Stomach (tissue), 19 donors: ENCODE measurements at regions of chr1 and their contacts with region 1.

Region 1: DNA sequence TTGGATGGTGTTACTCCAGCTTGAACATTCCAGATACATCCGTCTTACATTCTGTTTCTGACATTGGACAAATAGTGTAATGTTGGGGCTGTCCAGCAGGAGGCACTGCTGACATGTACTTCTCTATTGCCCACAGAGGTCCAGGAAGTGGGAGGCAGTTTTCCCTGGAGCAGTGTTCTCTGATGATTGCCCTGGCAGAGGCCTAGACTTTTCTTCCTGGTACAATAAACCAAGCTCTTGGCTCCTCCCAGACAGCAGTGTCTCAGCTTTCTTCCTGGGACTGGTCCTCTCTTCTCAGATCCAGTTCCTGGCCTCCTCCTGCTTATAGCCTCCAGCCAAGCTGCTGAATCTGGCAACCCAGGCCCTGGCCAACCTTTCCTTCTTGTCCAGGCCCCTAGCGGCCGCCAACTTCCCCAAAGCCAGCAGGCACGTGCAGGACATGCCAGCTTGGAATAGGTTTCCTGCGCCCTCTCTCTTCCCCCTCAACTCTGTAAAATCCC is 14.9 kb upstream of the IFNLR1 start:
- DNase-seq: peak; percentile 90 to 93
- H3K4me3 ChIP-seq: no peak overlapping the region
- H3K27ac ChIP-seq: peak overlapping the region in 4 of 5 donors; percentile 39 to 78 (median 64)
- H3K4me1 ChIP-seq: peaks cover 0 to 27% (median 11%) of the 10 kb centered on the region in 4 donors
- H3K27me3 ChIP-seq: peaks cover 0 to 13% (median 0%) of the 10 kb centered on the region in 3 donors
- CTCF ChIP-seq: peak in 5 of 7 experiments; percentile 60 to 82 (median 74)
- EP300 ChIP-seq: no peak
- POLR2A ChIP-seq: no peak

Region 2: GRCh38 chr1:24329797-24330543 is 128.0 kb after region 1 on chr1:
- intact Hi-C with region 1: no loop called
- DNase-seq: no peak
- H3K4me3 ChIP-seq: no peak overlapping the region
- H3K27ac ChIP-seq: no peak overlapping the region
- H3K4me1 ChIP-seq: no peaks in the 10 kb centered on the region
- H3K27me3 ChIP-seq: no peaks in the 10 kb centered on the region
- CTCF ChIP-seq: no peak
- EP300 ChIP-seq: no peak
- POLR2A ChIP-seq: no peak

Region 3: GRCh38 chr1:24385160-24385940 is 183.4 kb after region 1 on chr1:
- intact Hi-C with region 1: loop called (anchors 5 kb)
- DNase-seq: no peak
- H3K4me3 ChIP-seq: no peak overlapping the region
- H3K27ac ChIP-seq: peak overlapping the region in 2 of 5 donors; percentile 44 to 66
- H3K4me1 ChIP-seq: peaks cover 4 to 55% (median 24%) of the 10 kb centered on the region in 4 donors
- H3K27me3 ChIP-seq: no peaks in the 10 kb centered on the region
- CTCF ChIP-seq: no peak
- EP300 ChIP-seq: no peak
- POLR2A ChIP-seq: no peak